Activated CD4-positive, alpha-beta T cell treated with anti-CD3 and anti-CD28 coated beads for 36 hours (primary cell): ENCODE measurements at regions of chr1 and their contacts with region 1.

Region 1: GRCh38 chr1:166479052-166479631 is 312.3 kb upstream of the FAM78B start:
- DNase-seq: peak; percentile 70
- ATAC-seq: no peak
- H3K4me3 Mint-ChIP-seq: no peak overlapping the region
- H3K27ac Mint-ChIP-seq: no peak overlapping the region
- H3K4me1 Mint-ChIP-seq: no peaks in the 10 kb centered on the region
- H3K27me3 Mint-ChIP-seq: no peaks in the 10 kb centered on the region

Region 2: GRCh38 chr1:165717918-165718515 is 761.1 kb before region 1 on chr1:
- CTCF ChIA-PET with region 1: no interaction called
- POLR2A ChIA-PET with region 1: no interaction called
- intact Hi-C with region 1: loop called in 1 of 2 experiments (anchors 5 kb)
- DNase-seq: peak; percentile 55
- ATAC-seq: no peak
- H3K4me3 Mint-ChIP-seq: no peak overlapping the region
- H3K27ac Mint-ChIP-seq: no peak overlapping the region
- H3K4me1 Mint-ChIP-seq: no peaks in the 10 kb centered on the region
- H3K27me3 Mint-ChIP-seq: peaks cover 3% of the 10 kb centered on the region

Region 3: GRCh38 chr1:165928075-165928731 is 550.9 kb before region 1 on chr1:
- CTCF ChIA-PET with region 1: interaction called, 23 read pairs
- POLR2A ChIA-PET with region 1: no interaction called
- intact Hi-C with region 1: loop called (anchors 2 kb)
- DNase-seq: peak; percentile 73
- ATAC-seq: peak; percentile 84
- H3K4me3 Mint-ChIP-seq: no peak overlapping the region
- H3K27ac Mint-ChIP-seq: no peak overlapping the region
- H3K4me1 Mint-ChIP-seq: no peaks in the 10 kb centered on the region
- H3K27me3 Mint-ChIP-seq: peaks cover 8% of the 10 kb centered on the region

Region 4: DNA sequence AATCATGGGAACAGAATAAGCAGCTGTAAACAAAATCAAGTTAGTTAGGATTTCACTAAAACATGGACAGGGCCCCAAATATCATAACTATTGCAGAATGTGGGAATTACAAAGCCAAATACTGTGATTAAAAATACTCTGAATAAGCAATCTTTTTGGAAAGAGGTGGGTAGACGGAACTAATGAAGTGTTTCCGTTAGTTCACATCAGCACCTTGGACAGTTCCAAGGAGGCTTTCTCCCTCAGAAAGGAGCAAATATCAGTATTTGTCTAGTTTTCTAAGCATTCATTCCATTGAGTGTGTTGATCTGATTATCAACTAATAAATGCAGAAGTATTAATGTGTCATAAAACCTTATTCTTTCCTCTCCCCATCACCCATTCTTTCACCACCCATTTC is 409.8 kb before region 1 on chr1:
- CTCF ChIA-PET with region 1: no interaction called
- POLR2A ChIA-PET with region 1: no interaction called
- intact Hi-C with region 1: no loop called
- DNase-seq: peak; percentile 18
- ATAC-seq: no peak
- H3K4me3 Mint-ChIP-seq: no peak overlapping the region
- H3K27ac Mint-ChIP-seq: no peak overlapping the region
- H3K4me1 Mint-ChIP-seq: no peaks in the 10 kb centered on the region
- H3K27me3 Mint-ChIP-seq: no peaks in the 10 kb centered on the region

Region 5: DNA sequence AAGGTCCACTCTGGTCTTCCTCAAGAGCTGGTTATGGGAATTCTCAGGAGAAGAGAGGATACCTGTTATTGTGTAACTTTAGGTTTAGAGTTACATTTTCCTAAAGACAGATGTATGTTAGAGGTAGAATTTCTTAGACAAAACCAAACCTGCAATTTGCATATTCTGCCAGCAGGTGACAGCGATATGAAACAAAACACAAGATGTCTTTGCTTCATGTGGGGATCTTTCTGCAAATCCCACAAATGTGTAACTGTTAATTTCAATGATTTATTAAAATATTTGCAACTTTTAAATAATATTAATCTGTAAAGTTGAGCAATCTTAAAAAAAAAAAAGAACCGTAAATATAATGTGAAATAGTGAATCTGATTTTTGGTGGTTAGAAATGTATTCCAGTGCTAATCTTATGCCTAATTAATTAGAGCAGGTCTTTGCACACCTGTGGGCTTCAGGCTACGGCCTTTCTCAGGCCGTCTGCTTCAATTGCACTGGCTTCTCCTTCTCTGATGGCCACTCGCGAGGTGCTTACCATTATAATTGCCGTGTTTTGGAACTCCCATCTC is 345.8 kb before region 1 on chr1:
- CTCF ChIA-PET with region 1: interaction called, 8 read pairs
- POLR2A ChIA-PET with region 1: no interaction called
- intact Hi-C with region 1: loop called (anchors 1 to 5 kb)
- DNase-seq: peak; percentile 22
- ATAC-seq: no peak
- H3K4me3 Mint-ChIP-seq: no peak overlapping the region
- H3K27ac Mint-ChIP-seq: no peak overlapping the region
- H3K4me1 Mint-ChIP-seq: no peaks in the 10 kb centered on the region
- H3K27me3 Mint-ChIP-seq: peaks cover 8% of the 10 kb centered on the region